ENCODE measurements at regions of chr14 and their contacts with region 1.

Region 1: DNA sequence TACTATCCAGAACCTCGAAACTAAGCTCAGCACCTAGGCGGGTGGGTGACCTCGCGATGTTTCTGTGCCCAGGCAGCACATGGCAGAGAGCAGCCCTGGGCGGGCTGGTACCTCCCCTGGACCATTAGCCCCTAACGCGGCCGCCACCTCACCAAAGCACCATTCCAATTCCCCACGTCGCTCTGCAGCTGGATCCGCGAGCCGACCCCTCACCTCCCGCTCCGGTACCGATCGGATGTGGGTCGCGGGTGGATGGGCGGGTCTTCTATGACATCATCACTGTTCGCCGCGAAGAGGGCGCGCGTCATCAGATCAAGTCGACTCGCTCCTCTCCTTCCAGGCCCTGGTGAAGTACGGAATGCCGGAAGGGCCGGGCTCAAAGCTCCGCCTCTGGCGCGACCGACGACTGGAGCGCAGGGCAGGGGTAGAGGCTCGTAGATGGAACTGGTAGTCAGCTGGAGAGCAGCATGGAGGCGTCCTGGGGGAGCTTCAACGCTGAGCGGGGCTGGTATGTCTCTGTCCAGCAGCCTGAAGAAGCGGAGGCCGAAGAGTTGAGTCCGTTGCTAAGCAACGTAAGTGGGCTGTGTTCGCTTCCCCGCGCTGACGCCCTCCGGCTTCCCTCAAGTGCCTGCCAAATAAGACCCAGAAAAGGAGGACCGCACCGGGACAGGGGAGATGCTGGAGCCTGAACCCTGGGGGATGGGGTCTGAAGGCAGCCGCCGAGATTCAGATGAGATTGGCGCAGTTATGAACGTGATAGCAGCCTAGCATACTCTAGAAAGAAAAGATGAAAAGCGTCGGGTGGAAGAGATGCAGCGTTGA is at the starts of genes SLC38A6 and TRMT5:
- DNase-seq: peak; percentile 92 to 94
- ATAC-seq: peak; percentile 86 to 92
- H3K4me3 ChIP-seq: peak within 1 kb of the TSS; percentile 69 to 90 (median 83)
- H3K27ac ChIP-seq: peak within 1 kb of the TSS; percentile 88 to 95 (median 90)
- H3K4me1 ChIP-seq: peaks cover 56 to 57% of the 10 kb centered on the region in 2 donors
- H3K27me3 ChIP-seq: no peaks in the 10 kb centered on the region
- CTCF ChIP-seq: peak in 1 of 5 experiments; percentile 30
- POLR2A ChIP-seq: peak; percentile 48 to 58
- total RNA-seq, gene SLC38A6: 4.0 to 22.6 (median 7.0) TPM
- total RNA-seq, gene TRMT5: 5.9 to 7.6 (median 6.5) TPM

Region 2: DNA sequence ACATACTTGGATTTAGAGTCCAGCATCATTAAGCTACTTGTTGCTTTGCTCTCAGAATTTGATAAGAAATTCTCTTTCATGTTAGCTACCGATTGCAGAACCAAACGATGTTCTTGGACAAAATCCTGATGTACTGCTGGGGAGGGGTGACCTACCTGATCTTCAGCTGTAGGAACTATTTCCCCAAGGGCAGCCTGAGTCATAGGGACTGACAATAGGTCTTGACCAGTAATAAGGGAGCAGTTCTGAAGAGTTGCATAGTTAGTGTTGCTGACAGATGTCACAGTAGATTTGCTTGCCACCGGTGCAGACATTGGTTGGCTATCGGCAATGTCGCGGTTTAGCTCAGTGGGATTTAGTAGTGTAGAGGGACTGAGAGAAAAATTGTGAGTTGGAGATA is 267.5 kb before region 1 on chr14:
- in situ Hi-C with region 1: loop called in 1 of 4 experiments (anchors 10 kb)
- intact Hi-C with region 1: no loop called
- DNase-seq: no peak
- ATAC-seq: no peak
- H3K4me3 ChIP-seq: no peak overlapping the region
- H3K27ac ChIP-seq: peak overlapping the region in 1 of 4 donors; percentile 41
- H3K4me1 ChIP-seq: peaks cover 17 to 23% of the 10 kb centered on the region in 2 donors
- H3K27me3 ChIP-seq: no peaks in the 10 kb centered on the region
- CTCF ChIP-seq: no peak
- POLR2A ChIP-seq: no peak

Region 3: DNA sequence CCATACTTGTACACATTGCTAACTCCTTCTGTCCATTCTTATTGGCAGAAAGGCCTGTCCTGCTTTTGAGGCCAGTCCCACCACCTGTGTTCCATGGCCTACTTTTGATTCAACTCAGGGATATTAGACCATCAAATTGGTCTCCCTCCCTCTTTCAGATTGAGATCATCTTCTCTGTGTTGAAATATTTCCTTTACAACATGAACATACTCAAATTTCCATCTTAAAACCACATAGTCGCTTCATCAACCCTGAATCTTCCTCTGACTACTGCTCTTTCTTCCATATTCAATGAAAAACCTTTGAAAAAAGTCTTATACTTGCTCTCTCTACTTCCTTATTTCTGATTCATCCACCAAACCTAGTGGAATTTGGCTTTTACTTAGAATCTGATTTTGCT is 35.0 kb before region 1 on chr14:
- in situ Hi-C with region 1: no loop called
- intact Hi-C with region 1: no loop called
- DNase-seq: no peak
- ATAC-seq: peak; percentile 51 to 64
- H3K4me3 ChIP-seq: peak overlapping the region in 1 of 4 donors; percentile 1
- H3K27ac ChIP-seq: peak overlapping the region; percentile 56 to 75 (median 66)
- H3K4me1 ChIP-seq: peaks cover 56 to 59% of the 10 kb centered on the region in 2 donors
- H3K27me3 ChIP-seq: no peaks in the 10 kb centered on the region
- CTCF ChIP-seq: no peak
- POLR2A ChIP-seq: no peak

Region 4: GRCh38 chr14:61229475-61229888 is 248.5 kb after region 1 on chr14:
- in situ Hi-C with region 1: no loop called
- intact Hi-C with region 1: no loop called
- DNase-seq: no peak
- ATAC-seq: peak in 1 of 2 donors; percentile 2
- H3K4me3 ChIP-seq: peak overlapping the region in 1 of 4 donors; percentile 15
- H3K27ac ChIP-seq: peak overlapping the region in 3 of 4 donors; percentile 60 to 73 (median 73)
- H3K4me1 ChIP-seq: peaks cover 23 to 56% of the 10 kb centered on the region in 2 donors
- H3K27me3 ChIP-seq: no peaks in the 10 kb centered on the region
- CTCF ChIP-seq: no peak
- POLR2A ChIP-seq: no peak

Measured in gastrocnemius medialis (tissue), 4 donors.